ENCODE measurements at regions of chrX and their contacts with region 1.

Region 1: DNA sequence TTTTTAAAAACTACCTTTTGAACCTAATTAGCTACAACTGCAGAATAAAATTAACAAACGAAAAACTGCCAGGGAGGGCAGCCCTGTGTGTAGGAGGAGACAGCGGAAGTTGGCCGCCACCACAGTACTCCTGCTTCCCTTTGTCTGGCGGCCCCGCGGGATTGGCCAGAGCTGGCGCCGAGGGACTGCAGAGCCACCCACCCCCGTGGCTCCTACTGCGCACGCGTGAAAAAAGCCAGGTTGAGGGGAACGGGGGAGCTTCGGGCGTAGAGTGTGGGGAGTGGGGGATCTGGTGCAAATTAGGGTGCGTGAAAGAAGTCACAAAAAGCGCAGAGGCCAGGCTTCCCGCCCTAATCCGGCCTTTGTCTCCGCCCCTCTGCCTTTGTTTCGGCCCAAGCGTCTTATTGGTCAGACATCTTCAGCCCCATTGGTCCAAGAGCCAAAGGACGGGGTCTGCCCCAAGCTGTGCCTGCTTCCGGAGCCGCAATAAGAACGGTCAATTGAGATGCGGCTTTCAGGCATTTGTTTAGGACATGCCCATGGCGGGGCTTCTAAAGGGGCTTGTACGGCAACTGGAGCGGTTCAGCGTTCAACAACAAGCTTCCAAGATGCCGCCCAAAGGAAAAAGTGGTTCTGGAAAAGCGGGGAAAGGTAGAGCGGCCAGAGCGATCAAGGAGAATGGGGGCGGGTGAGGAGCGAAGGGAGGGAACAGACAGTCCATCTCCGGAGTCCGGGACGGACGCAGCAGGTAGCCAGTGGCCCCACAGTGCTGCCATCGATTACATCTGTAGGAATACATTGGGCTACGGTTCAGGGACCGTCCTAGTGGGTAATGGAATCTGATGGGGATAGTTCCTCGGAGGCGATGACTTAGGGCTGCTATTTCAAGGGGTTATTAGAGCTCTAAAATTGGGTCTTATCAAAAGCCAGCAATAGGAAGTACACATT is at the start of gene PIN4:
- DNase-seq: peak; percentile 55 to 83 (median 77)
- ATAC-seq: peak; percentile 94
- H3K4me3 ChIP-seq: peak within 1 kb of the TSS; percentile 65
- H3K4me3 Mint-ChIP-seq: no peak within 1 kb of the TSS
- H3K27ac ChIP-seq: peak within 1 kb of the TSS; percentile 74
- H3K27ac Mint-ChIP-seq: peak within 1 kb of the TSS in 1 of 9 donors; percentile 4
- H3K4me1 ChIP-seq: peaks cover 8 to 19% of the 10 kb centered on the region in 2 donors
- H3K4me1 Mint-ChIP-seq: peaks cover 4 to 24% (median 16%) of the 10 kb centered on the region in 7 donors
- H3K27me3 ChIP-seq: no peaks in the 10 kb centered on the region
- H3K27me3 Mint-ChIP-seq: no peaks in the 10 kb centered on the region
- total RNA-seq, gene PIN4: 2.0 to 13.6 (median 9.5) TPM

Region 2: DNA sequence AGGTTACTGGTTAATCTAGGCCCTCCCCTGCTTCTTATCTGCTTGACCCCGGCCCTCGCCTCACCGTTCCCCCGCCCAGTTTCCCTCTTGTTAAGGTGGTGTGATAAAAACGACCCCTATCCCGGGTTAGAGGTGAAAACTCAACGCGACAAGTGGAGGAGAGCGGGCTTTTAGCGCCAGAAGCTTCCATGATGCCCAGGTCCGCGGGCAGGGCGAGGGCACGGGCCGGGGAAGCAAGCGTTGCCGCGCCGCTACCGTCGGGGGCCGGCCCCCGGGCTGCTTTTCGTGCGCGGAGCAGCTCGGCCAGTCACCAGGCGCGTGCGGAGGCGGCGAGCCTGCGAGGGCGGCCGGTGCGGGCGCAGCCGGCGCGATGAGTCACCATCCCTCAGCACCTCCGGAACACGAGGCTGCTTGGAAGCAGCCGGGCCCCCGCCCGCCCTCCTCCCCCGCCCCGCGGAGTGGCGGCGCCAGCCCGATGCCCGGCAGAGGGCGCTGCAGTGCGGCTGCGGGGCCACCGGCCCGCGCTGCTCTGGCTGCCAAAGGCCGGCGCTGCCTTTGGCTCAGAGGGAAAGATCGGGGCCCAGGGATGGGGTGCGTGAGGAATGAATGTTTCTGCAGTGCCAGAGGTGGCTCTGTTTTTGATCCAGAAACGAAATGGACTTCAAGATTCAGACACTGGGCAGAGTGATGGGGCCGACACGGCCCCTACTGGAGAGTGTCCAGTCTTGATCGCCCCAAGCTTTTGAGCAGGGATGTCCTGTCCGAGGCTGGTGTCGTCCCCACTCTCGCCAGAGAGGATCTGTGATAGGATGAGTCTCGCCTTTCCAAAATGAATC is 163.0 kb before region 1 on chrX:
- CTCF ChIA-PET with region 1: no interaction called
- POLR2A ChIA-PET with region 1: no interaction called
- intact Hi-C with region 1: loop called in 1 of 2 experiments (anchors 2 kb)
- DNase-seq: peak; percentile 41 to 83 (median 69)
- ATAC-seq: peak; percentile 98
- H3K4me3 ChIP-seq: peak overlapping the region; percentile 24
- H3K4me3 Mint-ChIP-seq: peak overlapping the region in 6 of 10 donors; percentile 17 to 51 (median 20)
- H3K27ac ChIP-seq: no peak overlapping the region
- H3K27ac Mint-ChIP-seq: no peak overlapping the region
- H3K4me1 ChIP-seq: peaks cover 0 to 5% of the 10 kb centered on the region in 2 donors
- H3K4me1 Mint-ChIP-seq: peaks cover 0 to 14% (median 0%) of the 10 kb centered on the region in 7 donors
- H3K27me3 ChIP-seq: no peaks in the 10 kb centered on the region
- H3K27me3 Mint-ChIP-seq: peaks cover 2 to 70% (median 3%) of the 10 kb centered on the region in 5 donors

Region 3: DNA sequence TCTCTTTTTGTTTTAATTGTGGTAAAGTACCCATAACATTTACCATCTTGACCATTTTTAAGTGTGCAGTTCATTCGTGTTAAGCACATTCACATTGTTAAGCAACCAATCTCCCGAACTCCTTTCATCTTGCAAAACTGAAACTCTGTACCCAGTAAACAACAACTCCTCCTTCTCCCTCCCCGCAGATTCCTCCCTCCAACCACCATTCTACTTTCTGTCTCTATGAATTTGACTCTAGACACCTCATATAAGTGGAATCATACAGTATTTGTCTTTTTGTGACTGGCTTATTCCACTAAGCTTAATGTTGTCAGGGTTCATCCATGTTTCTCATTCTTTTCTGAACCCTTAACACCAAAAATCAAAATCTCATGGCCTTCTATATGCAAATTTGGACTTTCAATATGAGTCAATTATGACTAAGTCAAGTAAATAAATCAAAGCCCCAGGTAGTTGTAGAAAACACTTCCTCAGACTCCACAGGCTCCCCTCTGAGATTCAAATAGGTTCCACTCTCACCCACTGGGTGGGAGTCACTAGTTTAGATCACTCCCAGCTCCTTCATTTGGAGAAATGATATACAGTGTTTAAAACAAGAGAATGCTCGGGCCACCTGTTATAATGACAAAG is 40.0 kb before region 1 on chrX:
- CTCF ChIA-PET with region 1: no interaction called
- POLR2A ChIA-PET with region 1: no interaction called
- intact Hi-C with region 1: loop called in 1 of 2 experiments (anchors 2 kb)
- DNase-seq: no peak
- ATAC-seq: no peak
- H3K4me3 ChIP-seq: no peak overlapping the region
- H3K4me3 Mint-ChIP-seq: peak overlapping the region in 2 of 10 donors; percentile 57 to 77
- H3K27ac ChIP-seq: no peak overlapping the region
- H3K27ac Mint-ChIP-seq: peak overlapping the region in 3 of 9 donors; percentile 23 to 79 (median 34)
- H3K4me1 ChIP-seq: no peaks in the 10 kb centered on the region
- H3K4me1 Mint-ChIP-seq: peaks cover 9 to 26% (median 18%) of the 10 kb centered on the region in 7 donors
- H3K27me3 ChIP-seq: no peaks in the 10 kb centered on the region
- H3K27me3 Mint-ChIP-seq: peaks cover 0 to 33% (median 0%) of the 10 kb centered on the region in 5 donors

Region 4: DNA sequence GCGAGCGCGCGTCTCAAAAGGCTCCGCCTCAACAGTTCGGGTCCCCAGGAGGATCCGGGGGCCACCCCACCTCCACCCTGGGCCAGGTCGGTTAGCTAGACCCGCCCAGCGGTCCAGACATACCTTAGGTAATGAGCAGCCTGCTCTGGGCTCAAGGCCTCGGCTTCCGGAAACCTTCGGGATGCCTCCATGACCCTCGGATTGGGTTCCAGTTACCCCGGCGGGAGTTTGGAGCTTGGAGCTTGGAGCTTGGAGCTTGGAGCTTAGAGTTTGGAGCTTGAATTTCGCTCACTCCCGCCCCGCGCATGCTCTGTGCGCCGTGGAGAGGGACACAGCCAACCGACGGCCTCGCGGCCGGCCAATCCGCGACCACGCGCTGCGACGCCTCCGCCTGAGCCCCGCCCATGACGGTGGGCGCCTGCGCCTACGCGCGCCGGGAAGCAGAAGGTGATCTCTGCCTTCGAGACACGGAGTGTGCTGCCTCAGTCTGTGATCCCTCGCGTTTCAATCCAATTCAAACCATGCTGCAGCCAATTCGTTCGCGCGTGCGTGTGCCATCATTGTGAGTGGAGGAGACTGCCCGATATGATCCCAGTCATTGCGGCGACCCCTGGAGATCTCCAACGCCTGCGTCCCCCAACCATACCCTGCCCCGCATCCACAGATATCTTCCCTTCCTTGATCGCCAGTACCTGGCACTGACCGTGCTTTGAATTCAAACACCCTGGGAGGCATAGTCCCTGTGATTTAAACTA is 57.4 kb after region 1 on chrX and contains the start of gene ERCC6L:
- CTCF ChIA-PET with region 1: no interaction called
- POLR2A ChIA-PET with region 1: no interaction called
- intact Hi-C with region 1: loop called (anchors 2 to 5 kb)
- DNase-seq: peak; percentile 71 to 87 (median 81)
- ATAC-seq: peak; percentile 99
- H3K4me3 ChIP-seq: peak within 1 kb of the TSS; percentile 62
- H3K4me3 Mint-ChIP-seq: peak within 1 kb of the TSS; percentile 45 to 87 (median 76)
- H3K27ac ChIP-seq: peak within 1 kb of the TSS; percentile 47
- H3K27ac Mint-ChIP-seq: peak within 1 kb of the TSS in 7 of 9 donors; percentile 48 to 91 (median 56)
- H3K4me1 ChIP-seq: no peaks in the 10 kb centered on the region
- H3K4me1 Mint-ChIP-seq: peaks cover 0 to 17% (median 0%) of the 10 kb centered on the region in 7 donors
- H3K27me3 ChIP-seq: no peaks in the 10 kb centered on the region
- H3K27me3 Mint-ChIP-seq: no peaks in the 10 kb centered on the region
- total RNA-seq, gene ERCC6L: 0.11 to 6.6 (median 0.16) TPM

Region 5: GRCh38 chrX:72276478-72276953 is 95.1 kb after region 1 on chrX:
- CTCF ChIA-PET with region 1: interaction called, 4 read pairs
- POLR2A ChIA-PET with region 1: interaction called, 12 read pairs
- intact Hi-C with region 1: loop called (anchors 1 to 10 kb)
- DNase-seq: peak in 1 of 9 donors; percentile 6
- ATAC-seq: peak; percentile 3
- H3K4me3 ChIP-seq: peak overlapping the region; percentile 70
- H3K4me3 Mint-ChIP-seq: peak overlapping the region; percentile 74 to 92 (median 87)
- H3K27ac ChIP-seq: peak overlapping the region; percentile 91
- H3K27ac Mint-ChIP-seq: peak overlapping the region; percentile 78 to 96 (median 92)
- H3K4me1 ChIP-seq: peaks cover 16 to 30% of the 10 kb centered on the region in 2 donors
- H3K4me1 Mint-ChIP-seq: peaks cover 13 to 47% (median 37%) of the 10 kb centered on the region in 7 donors
- H3K27me3 ChIP-seq: no peaks in the 10 kb centered on the region
- H3K27me3 Mint-ChIP-seq: peaks cover 0 to 12% (median 0%) of the 10 kb centered on the region in 5 donors